ENCODE measurements at regions of chr19 and their contacts with region 1.

Region 1: GRCh38 chr19:45092747-45093678 is at the start of gene PPP1R37:
- DNase-seq: peak; percentile 81 to 97 (median 92)
- ATAC-seq: peak; percentile 85
- H3K4me3 ChIP-seq: peak within 1 kb of the TSS; percentile 75
- H3K4me3 Mint-ChIP-seq: peak within 1 kb of the TSS; percentile 87 to 99 (median 96)
- H3K27ac ChIP-seq: peak within 1 kb of the TSS; percentile 90
- H3K27ac Mint-ChIP-seq: peak within 1 kb of the TSS; percentile 96 to 100 (median 98)
- H3K4me1 ChIP-seq: peaks cover 33 to 46% of the 10 kb centered on the region in 2 donors
- H3K4me1 Mint-ChIP-seq: peaks cover 56 to 81% (median 60%) of the 10 kb centered on the region in 7 donors
- H3K27me3 ChIP-seq: no peaks in the 10 kb centered on the region
- H3K27me3 Mint-ChIP-seq: no peaks in the 10 kb centered on the region
- total RNA-seq, gene PPP1R37: 20.0 to 28.3 (median 21.9) TPM

Region 2: GRCh38 chr19:44777715-44778347 is 315.2 kb before region 1 on chr19 and contains the start of gene CBLC:
- CTCF ChIA-PET with region 1: no interaction called
- POLR2A ChIA-PET with region 1: no interaction called
- intact Hi-C with region 1: no loop called
- DNase-seq: no peak
- ATAC-seq: no peak
- H3K4me3 ChIP-seq: no peak within 1 kb of the TSS
- H3K4me3 Mint-ChIP-seq: no peak within 1 kb of the TSS
- H3K27ac ChIP-seq: no peak within 1 kb of the TSS
- H3K27ac Mint-ChIP-seq: no peak within 1 kb of the TSS
- H3K4me1 ChIP-seq: no peaks in the 10 kb centered on the region
- H3K4me1 Mint-ChIP-seq: no peaks in the 10 kb centered on the region
- H3K27me3 ChIP-seq: no peaks in the 10 kb centered on the region
- H3K27me3 Mint-ChIP-seq: peaks cover 0 to 3% (median 0%) of the 10 kb centered on the region in 5 donors
- total RNA-seq, gene CBLC: not detected

Region 3: GRCh38 chr19:44890366-44891015 is 202.5 kb before region 1 on chr19:
- CTCF ChIA-PET with region 1: no interaction called
- POLR2A ChIA-PET with region 1: interaction called, 9 read pairs
- intact Hi-C with region 1: loop called (anchors 1 to 2 kb)
- DNase-seq: peak; percentile 97 to 100 (median 100)
- ATAC-seq: peak; percentile 86
- H3K4me3 ChIP-seq: peak overlapping the region; percentile 69
- H3K4me3 Mint-ChIP-seq: peak overlapping the region; percentile 83 to 93 (median 89)
- H3K27ac ChIP-seq: peak overlapping the region; percentile 84
- H3K27ac Mint-ChIP-seq: peak overlapping the region; percentile 90 to 96 (median 94)
- H3K4me1 ChIP-seq: peaks cover 10 to 20% of the 10 kb centered on the region in 2 donors
- H3K4me1 Mint-ChIP-seq: peaks cover 18 to 44% (median 35%) of the 10 kb centered on the region in 7 donors
- H3K27me3 ChIP-seq: no peaks in the 10 kb centered on the region
- H3K27me3 Mint-ChIP-seq: no peaks in the 10 kb centered on the region

Region 4: GRCh38 chr19:44972802-44973201 is 120.2 kb before region 1 on chr19:
- CTCF ChIA-PET with region 1: no interaction called
- POLR2A ChIA-PET with region 1: no interaction called
- intact Hi-C with region 1: no loop called
- DNase-seq: no peak
- ATAC-seq: no peak
- H3K4me3 ChIP-seq: no peak overlapping the region
- H3K4me3 Mint-ChIP-seq: no peak overlapping the region
- H3K27ac ChIP-seq: no peak overlapping the region
- H3K27ac Mint-ChIP-seq: no peak overlapping the region
- H3K4me1 ChIP-seq: no peaks in the 10 kb centered on the region
- H3K4me1 Mint-ChIP-seq: peaks cover 0 to 5% (median 0%) of the 10 kb centered on the region in 7 donors
- H3K27me3 ChIP-seq: no peaks in the 10 kb centered on the region
- H3K27me3 Mint-ChIP-seq: no peaks in the 10 kb centered on the region

Region 5: GRCh38 chr19:45038931-45039893 is 53.8 kb before region 1 on chr19 and contains the start of gene CLASRP:
- CTCF ChIA-PET with region 1: no interaction called
- POLR2A ChIA-PET with region 1: interaction called, 10 read pairs
- intact Hi-C with region 1: loop called (anchors 1 kb)
- DNase-seq: peak; percentile 73 to 92 (median 85)
- ATAC-seq: peak; percentile 96
- H3K4me3 ChIP-seq: peak within 1 kb of the TSS; percentile 85
- H3K4me3 Mint-ChIP-seq: peak within 1 kb of the TSS; percentile 89 to 100 (median 99)
- H3K27ac ChIP-seq: peak within 1 kb of the TSS; percentile 100
- H3K27ac Mint-ChIP-seq: peak within 1 kb of the TSS; percentile 90 to 99 (median 98)
- H3K4me1 ChIP-seq: peaks cover 15 to 24% of the 10 kb centered on the region in 2 donors
- H3K4me1 Mint-ChIP-seq: peaks cover 26 to 43% (median 33%) of the 10 kb centered on the region in 7 donors
- H3K27me3 ChIP-seq: no peaks in the 10 kb centered on the region
- H3K27me3 Mint-ChIP-seq: no peaks in the 10 kb centered on the region
- total RNA-seq, gene CLASRP: 94.7 to 185 (median 163) TPM

Region 6: DNA sequence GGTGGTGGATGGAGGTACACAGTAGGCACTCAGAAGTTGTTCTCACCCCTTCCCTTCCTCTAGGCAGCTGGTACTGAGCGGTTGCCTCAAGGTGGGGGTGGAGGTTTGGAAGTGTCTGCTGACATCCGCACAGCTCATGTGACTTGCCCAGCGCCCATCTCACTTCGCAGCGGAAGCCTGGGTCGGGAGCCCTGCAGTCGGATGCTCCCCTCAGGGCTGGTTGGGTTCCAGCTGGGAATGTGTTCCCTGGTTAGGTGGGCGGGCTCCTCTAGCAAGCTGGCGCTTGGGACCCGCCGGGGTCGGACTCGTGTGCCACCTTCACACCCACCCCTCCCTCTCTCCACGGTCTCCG is 10.1 kb after region 1 on chr19:
- CTCF ChIA-PET with region 1: interaction called, 8 read pairs
- POLR2A ChIA-PET with region 1: interaction called, 22 read pairs
- intact Hi-C with region 1: loop called in 1 of 2 experiments (anchors 1 kb)
- DNase-seq: peak in 8 of 9 donors; percentile 25 to 66 (median 50)
- ATAC-seq: peak; percentile 90
- H3K4me3 ChIP-seq: peak overlapping the region; percentile 58
- H3K4me3 Mint-ChIP-seq: peak overlapping the region; percentile 40 to 85 (median 72)
- H3K27ac ChIP-seq: peak overlapping the region; percentile 68
- H3K27ac Mint-ChIP-seq: peak overlapping the region in 7 of 9 donors; percentile 65 to 88 (median 72)
- H3K4me1 ChIP-seq: peaks cover 24 to 36% of the 10 kb centered on the region in 2 donors
- H3K4me1 Mint-ChIP-seq: peaks cover 35 to 81% (median 66%) of the 10 kb centered on the region in 7 donors
- H3K27me3 ChIP-seq: no peaks in the 10 kb centered on the region
- H3K27me3 Mint-ChIP-seq: no peaks in the 10 kb centered on the region

Region 7: DNA sequence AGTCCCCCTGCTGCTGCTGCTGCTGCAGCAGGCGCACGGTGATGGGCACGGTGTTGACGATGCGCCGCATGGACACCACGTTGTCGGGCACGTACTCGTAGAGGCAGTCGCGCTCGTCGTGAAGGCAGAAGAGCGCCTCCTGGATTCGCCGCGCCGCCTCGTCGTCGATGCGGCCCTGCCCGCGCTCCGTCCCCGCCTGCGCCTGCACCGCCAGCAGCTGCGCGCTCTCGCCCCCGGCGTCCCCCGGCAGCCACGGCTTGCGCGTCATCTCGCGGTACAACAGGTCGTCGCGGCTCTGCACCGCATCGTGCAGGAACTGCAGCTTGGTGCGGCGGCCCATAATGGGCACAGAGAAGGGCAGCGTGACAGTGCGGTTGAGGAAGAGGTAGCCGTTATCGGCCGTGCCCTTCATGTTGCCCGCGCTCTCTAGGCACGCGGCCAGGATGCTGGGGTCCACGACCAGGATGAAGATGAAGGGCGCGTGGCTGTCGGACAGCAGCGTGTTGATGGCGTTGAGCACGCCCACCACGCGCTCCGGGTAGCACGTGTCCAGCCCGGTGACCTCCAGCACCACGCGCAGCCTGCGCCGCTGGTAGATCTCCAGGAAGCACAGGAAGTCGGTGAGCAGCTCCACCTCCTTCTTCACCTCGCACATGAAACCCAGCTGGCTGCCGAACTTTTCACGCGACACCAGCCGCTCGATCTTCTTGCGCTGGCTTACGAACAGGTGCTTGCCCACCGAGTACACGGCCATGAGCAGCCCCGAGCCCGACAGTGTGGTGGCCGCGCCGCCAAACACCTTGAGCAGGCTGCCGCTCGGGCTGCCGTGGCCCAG is 59.7 kb after region 1 on chr19:
- CTCF ChIA-PET with region 1: interaction called, 3 read pairs
- POLR2A ChIA-PET with region 1: interaction called, 9 read pairs
- intact Hi-C with region 1: loop called in 1 of 2 experiments (anchors 2 kb)
- DNase-seq: peak; percentile 26 to 63 (median 50)
- ATAC-seq: peak; percentile 70
- H3K4me3 ChIP-seq: peak overlapping the region; percentile 51
- H3K4me3 Mint-ChIP-seq: peak overlapping the region; percentile 76 to 90 (median 82)
- H3K27ac ChIP-seq: no peak overlapping the region
- H3K27ac Mint-ChIP-seq: peak overlapping the region in 7 of 9 donors; percentile 14 to 78 (median 57)
- H3K4me1 ChIP-seq: peaks cover 7 to 21% of the 10 kb centered on the region in 2 donors
- H3K4me1 Mint-ChIP-seq: peaks cover 9 to 28% (median 22%) of the 10 kb centered on the region in 7 donors
- H3K27me3 ChIP-seq: no peaks in the 10 kb centered on the region
- H3K27me3 Mint-ChIP-seq: peaks cover 6 to 30% (median 10%) of the 10 kb centered on the region in 5 donors

Measured in naive thymus-derived CD4-positive, alpha-beta T cell (primary cell).